Activated T-helper 1 cell treated with anti-CD3 and anti-CD28 coated beads, Interleukin-12 subunit alpha, Interleukin-12 subunit beta, Interleukin-2, Interleukin-4 antibody, amounts not matched to agents 30 ng/mL and 10 ng/mL and 1 ng/mL, durations not matched to agents 14 hours and 24 hours and 36 hours (primary cell): ENCODE measurements at regions of chr17 and their contacts with region 1.

Region 1: GRCh38 chr17:82551779-82552457 is 32.4 kb downstream of the FOXK2 start:
- DNase-seq: peak; percentile 75
- H3K4me3 Mint-ChIP-seq: no peak overlapping the region
- H3K27ac Mint-ChIP-seq: no peak overlapping the region
- H3K4me1 Mint-ChIP-seq: peaks cover 35% of the 10 kb centered on the region
- H3K27me3 Mint-ChIP-seq: no peaks in the 10 kb centered on the region

Region 2: GRCh38 chr17:82351716-82352488 is 200.0 kb before region 1 on chr17:
- intact Hi-C with region 1: loop called (anchors 1 kb)
- DNase-seq: peak; percentile 73
- H3K4me3 Mint-ChIP-seq: no peak overlapping the region
- H3K27ac Mint-ChIP-seq: no peak overlapping the region
- H3K4me1 Mint-ChIP-seq: no peaks in the 10 kb centered on the region
- H3K27me3 Mint-ChIP-seq: no peaks in the 10 kb centered on the region

Region 3: DNA sequence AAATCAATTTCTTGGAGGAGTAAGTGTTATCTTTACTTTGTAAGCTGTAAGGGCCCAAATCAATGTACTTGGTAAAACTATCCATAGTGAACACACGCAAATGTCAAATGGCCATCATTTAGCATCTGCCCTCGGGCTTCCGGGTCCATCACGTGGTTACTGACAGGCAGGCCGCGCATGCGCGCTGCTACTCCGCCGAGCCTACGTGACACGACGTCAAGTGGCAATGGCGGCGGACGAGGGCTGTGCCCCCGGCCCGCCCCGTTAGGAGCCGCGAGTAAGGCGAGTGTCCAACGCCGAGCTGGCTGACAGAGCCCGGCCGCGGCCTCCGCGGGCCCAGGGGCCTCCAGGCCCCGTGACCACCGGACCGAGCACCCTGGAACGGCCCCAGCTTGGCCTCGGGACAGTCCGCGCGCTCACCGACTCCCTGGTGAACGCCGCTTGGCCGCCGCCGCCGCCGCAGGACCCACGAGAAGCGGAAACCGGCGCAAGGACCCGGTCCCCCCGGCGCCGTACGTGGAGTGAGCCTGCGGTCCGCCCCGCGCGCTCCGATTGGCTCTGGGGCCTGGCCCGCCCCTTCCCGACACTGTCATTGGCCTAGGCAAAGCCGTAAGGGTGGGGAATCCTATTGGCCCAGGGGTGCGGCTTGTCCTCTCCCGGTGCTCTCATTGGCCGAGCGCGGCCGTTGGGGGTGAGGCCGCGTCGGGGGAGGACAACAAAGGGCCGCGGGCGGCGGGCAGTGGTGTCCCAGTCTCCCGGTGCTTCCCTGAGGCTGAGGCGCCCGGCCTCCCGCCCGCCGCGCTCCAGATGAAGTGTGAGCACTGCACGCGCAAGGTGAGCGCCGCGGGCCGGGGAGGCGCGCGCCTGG is 93.7 kb before region 1 on chr17 and contains the start of gene NARF:
- intact Hi-C with region 1: loop called (anchors 2 kb)
- DNase-seq: peak; percentile 99
- H3K4me3 Mint-ChIP-seq: peak within 1 kb of the TSS; percentile 96
- H3K27ac Mint-ChIP-seq: peak within 1 kb of the TSS; percentile 95
- H3K4me1 Mint-ChIP-seq: peaks cover 45% of the 10 kb centered on the region
- H3K27me3 Mint-ChIP-seq: no peaks in the 10 kb centered on the region
- total RNA-seq, gene NARF: 99.0 and 103 TPM in 2 replicates

Region 4: GRCh38 chr17:82494236-82495055 is 57.5 kb before region 1 on chr17:
- intact Hi-C with region 1: loop called (anchors 1 kb)
- DNase-seq: peak; percentile 81
- H3K4me3 Mint-ChIP-seq: peak overlapping the region; percentile 12
- H3K27ac Mint-ChIP-seq: peak overlapping the region; percentile 87
- H3K4me1 Mint-ChIP-seq: peaks cover 29% of the 10 kb centered on the region
- H3K27me3 Mint-ChIP-seq: peaks cover 2% of the 10 kb centered on the region

Region 5: DNA sequence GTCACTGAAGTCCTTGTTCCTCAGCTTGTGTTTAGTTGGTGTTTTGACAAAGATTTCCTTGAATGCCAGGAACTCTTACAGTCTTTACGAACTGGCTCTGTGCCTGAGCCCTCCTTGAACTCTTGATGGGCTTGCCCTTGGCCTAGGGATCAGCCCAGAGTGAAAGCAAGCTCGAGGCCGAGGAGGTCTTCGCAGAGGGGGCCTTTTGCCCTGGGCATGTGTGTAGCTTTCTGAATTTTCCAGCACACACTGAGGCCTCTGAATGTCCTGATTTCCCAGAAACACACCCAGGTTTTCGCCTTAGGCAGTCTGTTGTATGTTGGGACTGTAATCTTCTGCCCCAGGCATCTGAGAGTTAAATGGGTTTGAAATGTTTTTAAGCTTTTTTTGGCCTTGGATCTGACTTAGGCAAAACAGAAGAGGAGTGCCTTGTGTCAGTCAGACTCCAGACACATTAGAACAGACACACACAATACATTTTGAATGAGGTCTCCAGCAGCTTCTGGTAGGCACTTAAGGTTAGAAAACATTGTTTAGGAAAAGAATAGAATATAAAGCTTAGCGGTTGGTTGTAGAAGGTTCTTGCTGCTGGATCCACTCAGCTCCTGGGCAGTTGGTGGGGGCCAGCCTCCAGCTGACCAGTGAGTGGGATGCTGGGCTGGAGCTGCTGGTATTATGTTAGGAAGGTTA is 15.3 kb before region 1 on chr17:
- intact Hi-C with region 1: loop called (anchors 2 kb)
- DNase-seq: no peak
- H3K4me3 Mint-ChIP-seq: peak overlapping the region; percentile 3
- H3K27ac Mint-ChIP-seq: peak overlapping the region; percentile 76
- H3K4me1 Mint-ChIP-seq: peaks cover 51% of the 10 kb centered on the region
- H3K27me3 Mint-ChIP-seq: no peaks in the 10 kb centered on the region

Region 6: GRCh38 chr17:82636626-82637598 is 85.0 kb after region 1 on chr17:
- intact Hi-C with region 1: no loop called
- DNase-seq: no peak
- H3K4me3 Mint-ChIP-seq: no peak overlapping the region
- H3K27ac Mint-ChIP-seq: peak overlapping the region; percentile 38
- H3K4me1 Mint-ChIP-seq: peaks cover 26% of the 10 kb centered on the region
- H3K27me3 Mint-ChIP-seq: no peaks in the 10 kb centered on the region